Activated CD4-positive, alpha-beta T cell treated with anti-CD3 and anti-CD28 coated beads for 36 hours (primary cell): ENCODE measurements at regions of chr12 and their contacts with region 1.

Region 1: GRCh38 chr12:53180220-53180930 is at the starts of genes CSAD and ZNF740:
- DNase-seq: peak; percentile 99
- ATAC-seq: peak; percentile 94
- H3K4me3 Mint-ChIP-seq: peak within 1 kb of the TSS; percentile 98
- H3K27ac Mint-ChIP-seq: peak within 1 kb of the TSS; percentile 98
- H3K4me1 Mint-ChIP-seq: peaks cover 60% of the 10 kb centered on the region
- H3K27me3 Mint-ChIP-seq: no peaks in the 10 kb centered on the region
- total RNA-seq, gene CSAD: 20.0 to 23.1 TPM
- total RNA-seq, gene ZNF740: 34.9 to 40.2 TPM

Region 2: GRCh38 chr12:53079226-53080117 is 100.9 kb before region 1 on chr12 and contains the start of gene SPRYD3:
- CTCF ChIA-PET with region 1: no interaction called
- POLR2A ChIA-PET with region 1: interaction called, 5 read pairs
- intact Hi-C with region 1: loop called (anchors 1 kb)
- DNase-seq: peak; percentile 98
- ATAC-seq: peak; percentile 98
- H3K4me3 Mint-ChIP-seq: peak within 1 kb of the TSS; percentile 80
- H3K27ac Mint-ChIP-seq: peak within 1 kb of the TSS; percentile 74
- H3K4me1 Mint-ChIP-seq: peaks cover 33% of the 10 kb centered on the region
- H3K27me3 Mint-ChIP-seq: no peaks in the 10 kb centered on the region
- total RNA-seq, gene SPRYD3: 13.7 to 18.2 TPM

Region 3: GRCh38 chr12:53205747-53206419 is 25.5 kb after region 1 on chr12:
- CTCF ChIA-PET with region 1: interaction called, 4 read pairs
- POLR2A ChIA-PET with region 1: no interaction called
- intact Hi-C with region 1: loop called (anchors 1 to 2 kb)
- DNase-seq: peak; percentile 89
- ATAC-seq: peak; percentile 78
- H3K4me3 Mint-ChIP-seq: peak overlapping the region; percentile 77
- H3K27ac Mint-ChIP-seq: peak overlapping the region; percentile 87
- H3K4me1 Mint-ChIP-seq: peaks cover 74% of the 10 kb centered on the region
- H3K27me3 Mint-ChIP-seq: no peaks in the 10 kb centered on the region

Region 4: GRCh38 chr12:53234271-53234914 is 54.0 kb after region 1 on chr12:
- CTCF ChIA-PET with region 1: no interaction called
- POLR2A ChIA-PET with region 1: no interaction called
- intact Hi-C with region 1: no loop called
- DNase-seq: no peak
- ATAC-seq: no peak
- H3K4me3 Mint-ChIP-seq: no peak overlapping the region
- H3K27ac Mint-ChIP-seq: no peak overlapping the region
- H3K4me1 Mint-ChIP-seq: peaks cover 67% of the 10 kb centered on the region
- H3K27me3 Mint-ChIP-seq: no peaks in the 10 kb centered on the region

Region 5: GRCh38 chr12:53267999-53268647 is 87.7 kb after region 1 on chr12 and contains the start of gene ESPL1:
- CTCF ChIA-PET with region 1: interaction called, 4 read pairs
- POLR2A ChIA-PET with region 1: interaction called, 13 read pairs
- intact Hi-C with region 1: loop called in 1 of 2 experiments (anchors 1 kb)
- DNase-seq: peak; percentile 93
- ATAC-seq: peak; percentile 86
- H3K4me3 Mint-ChIP-seq: peak within 1 kb of the TSS; percentile 92
- H3K27ac Mint-ChIP-seq: peak within 1 kb of the TSS; percentile 98
- H3K4me1 Mint-ChIP-seq: peaks cover 30% of the 10 kb centered on the region
- H3K27me3 Mint-ChIP-seq: no peaks in the 10 kb centered on the region
- total RNA-seq, gene ESPL1: 60.8 to 66.9 TPM

Region 6: DNA sequence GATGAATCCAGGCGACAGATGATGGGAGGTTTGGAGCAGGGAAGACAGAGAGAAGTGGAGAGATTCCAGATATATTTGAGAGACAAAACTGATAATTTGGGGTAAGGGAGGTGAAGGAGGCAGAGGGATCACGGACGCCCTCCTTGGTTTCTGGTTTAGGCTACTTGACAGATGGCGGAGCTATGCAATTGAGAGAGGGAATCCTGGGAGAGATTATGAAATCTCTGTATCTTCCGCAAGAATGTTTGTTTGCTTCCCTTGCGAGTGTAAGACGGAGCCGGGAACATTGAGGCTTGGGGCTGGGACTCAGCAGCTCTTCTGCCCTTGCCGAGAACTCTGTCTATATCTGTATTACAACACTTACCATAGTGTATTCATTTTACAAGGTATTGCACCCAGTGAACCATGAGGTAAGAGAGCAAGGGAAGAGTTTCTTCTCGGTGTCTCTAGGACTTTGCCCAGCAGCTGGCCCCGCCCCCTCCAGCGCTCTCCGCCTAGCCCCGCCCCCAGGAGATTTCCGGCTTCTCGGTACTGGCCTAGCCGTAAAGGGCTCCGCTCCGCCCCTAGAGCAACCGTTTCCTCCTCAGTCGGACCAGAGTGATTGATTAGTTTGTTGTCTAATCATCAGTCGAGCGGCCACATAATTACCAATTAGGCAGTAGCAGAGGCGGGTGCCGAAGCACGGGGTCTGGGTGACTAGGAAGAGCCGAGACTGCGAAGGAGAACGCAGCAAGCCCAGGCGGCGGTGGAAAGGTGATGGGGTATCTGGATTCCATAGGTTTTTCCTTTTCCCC is 260.9 kb after region 1 on chr12 and contains the start of gene PRR13:
- CTCF ChIA-PET with region 1: no interaction called
- POLR2A ChIA-PET with region 1: no interaction called
- intact Hi-C with region 1: loop called in 1 of 2 experiments (anchors 1 kb)
- DNase-seq: peak; percentile 100
- ATAC-seq: peak; percentile 99
- H3K4me3 Mint-ChIP-seq: peak within 1 kb of the TSS; percentile 92
- H3K27ac Mint-ChIP-seq: peak within 1 kb of the TSS; percentile 95
- H3K4me1 Mint-ChIP-seq: peaks cover 30% of the 10 kb centered on the region
- H3K27me3 Mint-ChIP-seq: no peaks in the 10 kb centered on the region
- total RNA-seq, gene PRR13: 250 to 266 TPM

Region 7: DNA sequence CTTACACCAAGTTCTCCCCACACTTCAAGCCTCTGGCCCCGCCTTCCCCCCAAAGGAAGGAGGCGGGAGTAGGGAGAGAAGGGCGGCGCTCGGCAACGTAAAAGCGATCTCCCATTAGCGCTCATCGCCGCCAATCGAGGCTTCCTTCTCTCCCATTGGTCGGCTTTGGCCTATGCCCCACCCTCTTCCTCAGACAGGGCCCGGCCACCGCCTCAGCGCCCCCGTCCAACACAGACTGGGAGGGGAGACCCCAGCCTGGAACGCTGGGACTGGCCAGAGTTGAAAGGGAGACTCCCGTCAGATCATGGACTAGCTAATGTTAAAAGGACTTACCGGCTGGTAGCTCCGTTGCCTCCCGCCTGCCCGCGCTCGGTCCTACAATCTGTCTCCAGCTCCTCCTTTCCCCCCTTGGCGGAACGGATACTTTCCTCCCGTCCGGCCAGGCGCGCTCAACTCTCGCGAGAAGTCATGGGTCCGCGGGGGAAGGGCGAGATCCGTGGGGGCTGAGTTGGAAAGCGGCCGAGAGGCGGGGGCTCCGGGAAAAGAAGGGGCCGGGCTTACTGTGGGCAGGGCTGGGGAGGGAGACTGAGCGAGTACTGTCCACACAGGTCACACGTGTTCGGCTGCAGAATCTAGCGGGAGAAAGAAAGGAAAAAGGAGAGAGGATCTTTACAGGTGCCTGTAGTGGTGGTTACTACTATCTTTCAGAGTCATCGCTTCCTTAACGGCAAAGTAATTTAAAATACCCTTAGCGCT is 445.7 kb after region 1 on chr12 and contains the start of gene ATF7:
- CTCF ChIA-PET with region 1: interaction called, 3 read pairs
- POLR2A ChIA-PET with region 1: no interaction called
- intact Hi-C with region 1: loop called in 1 of 2 experiments (anchors 1 kb)
- DNase-seq: peak; percentile 99
- ATAC-seq: peak; percentile 96
- H3K4me3 Mint-ChIP-seq: peak within 1 kb of the TSS; percentile 95
- H3K27ac Mint-ChIP-seq: peak within 1 kb of the TSS; percentile 84
- H3K4me1 Mint-ChIP-seq: peaks cover 35% of the 10 kb centered on the region
- H3K27me3 Mint-ChIP-seq: no peaks in the 10 kb centered on the region
- total RNA-seq, gene ATF7: 23.0 to 28.1 TPM

Region 8: GRCh38 chr12:54140588-54141388 is 960.4 kb after region 1 on chr12:
- CTCF ChIA-PET with region 1: no interaction called
- POLR2A ChIA-PET with region 1: no interaction called
- intact Hi-C with region 1: no loop called
- DNase-seq: no peak
- ATAC-seq: no peak
- H3K4me3 Mint-ChIP-seq: no peak overlapping the region
- H3K27ac Mint-ChIP-seq: no peak overlapping the region
- H3K4me1 Mint-ChIP-seq: no peaks in the 10 kb centered on the region
- H3K27me3 Mint-ChIP-seq: peaks cover 45% of the 10 kb centered on the region